Transverse colon (tissue), 4 donors: ENCODE measurements at regions of chr12 and their contacts with region 1.

Region 1: GRCh38 chr12:13011098-13011497 is 11.0 kb upstream of the HEBP1 start:
- DNase-seq: no peak
- H3K4me3 ChIP-seq: no peak overlapping the region
- H3K27ac ChIP-seq: no peak overlapping the region
- H3K4me1 ChIP-seq: no peaks in the 10 kb centered on the region
- H3K27me3 ChIP-seq: peaks cover 9% of the 10 kb centered on the region
- CTCF ChIP-seq: no peak
- EP300 ChIP-seq: no peak
- POLR2A ChIP-seq: no peak

Region 2: DNA sequence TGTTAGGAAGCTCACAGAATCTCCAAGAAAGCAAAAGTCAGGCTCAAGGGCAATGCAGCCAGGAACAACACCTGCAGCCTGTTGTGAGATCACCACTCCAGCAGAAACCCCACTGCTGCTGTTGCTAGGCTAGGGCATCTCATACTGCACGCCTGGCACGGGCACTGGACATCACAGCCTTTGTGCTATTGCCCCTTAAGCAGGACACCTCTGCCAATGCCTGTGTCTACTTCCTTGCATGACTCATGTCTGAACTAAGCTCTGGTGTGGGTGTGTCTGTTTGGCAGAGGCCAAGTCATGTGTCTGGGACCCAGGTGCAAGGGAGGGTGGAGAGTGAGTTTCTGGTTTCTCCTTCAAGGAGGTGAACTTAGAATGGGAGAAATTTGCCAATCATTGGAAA is 207.9 kb before region 1 on chr12:
- in situ Hi-C with region 1: no loop called
- intact Hi-C with region 1: no loop called
- DNase-seq: peak; percentile 85
- H3K4me3 ChIP-seq: no peak overlapping the region
- H3K27ac ChIP-seq: peak overlapping the region; percentile 67 to 87 (median 78)
- H3K4me1 ChIP-seq: peaks cover 4 to 59% (median 22%) of the 10 kb centered on the region in 4 donors
- H3K27me3 ChIP-seq: no peaks in the 10 kb centered on the region
- CTCF ChIP-seq: no peak
- EP300 ChIP-seq: peak; percentile 49
- POLR2A ChIP-seq: peak; percentile 51

Region 3: DNA sequence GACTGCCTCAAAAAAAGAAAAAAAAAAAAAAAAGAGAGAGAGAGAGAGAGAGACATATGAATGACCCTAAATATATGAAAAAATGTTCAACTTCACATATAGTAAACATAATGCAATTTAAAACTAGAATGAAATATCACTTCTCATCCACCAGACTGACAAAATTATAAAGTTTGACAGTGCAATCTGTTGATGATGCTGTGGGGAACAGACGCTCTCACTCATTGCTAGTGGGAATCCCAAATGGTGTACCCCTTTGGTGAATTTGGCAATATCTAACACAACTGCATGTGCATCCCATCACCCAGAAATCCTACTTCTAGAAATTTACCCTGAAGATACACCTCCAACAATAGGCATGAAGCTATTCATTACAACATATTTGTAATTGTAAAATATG is 94.7 kb after region 1 on chr12:
- in situ Hi-C with region 1: no loop called
- intact Hi-C with region 1: no loop called
- DNase-seq: no peak
- H3K4me3 ChIP-seq: no peak overlapping the region
- H3K27ac ChIP-seq: no peak overlapping the region
- H3K4me1 ChIP-seq: peaks cover 0 to 20% (median 16%) of the 10 kb centered on the region in 4 donors
- H3K27me3 ChIP-seq: no peaks in the 10 kb centered on the region
- CTCF ChIP-seq: no peak
- EP300 ChIP-seq: no peak
- POLR2A ChIP-seq: no peak

Region 4: DNA sequence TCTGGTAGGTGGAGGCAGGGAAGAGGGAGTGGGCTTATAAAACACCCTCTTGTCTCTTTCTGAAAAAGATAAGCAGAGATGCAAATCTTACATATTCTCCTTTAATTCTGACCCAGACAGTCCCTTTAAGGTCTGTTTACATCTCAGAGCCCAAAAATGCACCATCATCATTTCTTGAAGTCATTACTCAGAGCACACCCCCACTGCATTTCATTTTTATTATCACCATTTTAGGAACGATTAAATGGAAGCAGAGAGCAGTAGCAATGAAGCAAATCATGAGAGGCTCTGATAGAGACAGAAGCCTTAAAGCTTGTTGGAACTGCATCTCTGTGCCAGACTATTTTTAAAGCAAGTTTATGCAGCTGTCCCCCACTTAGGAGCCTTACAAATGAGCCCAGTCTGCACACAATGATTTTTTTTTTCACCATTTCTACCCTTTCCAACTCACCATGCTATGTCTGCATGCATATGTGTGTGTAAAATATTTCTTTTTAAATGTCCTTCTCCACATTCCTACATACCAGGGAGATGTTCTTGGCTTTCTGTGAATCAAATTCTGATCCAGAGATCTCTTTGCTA is 659.3 kb after region 1 on chr12:
- in situ Hi-C with region 1: no loop called
- intact Hi-C with region 1: loop called (anchors 5 kb)
- DNase-seq: no peak
- H3K4me3 ChIP-seq: no peak overlapping the region
- H3K27ac ChIP-seq: no peak overlapping the region
- H3K4me1 ChIP-seq: no peaks in the 10 kb centered on the region
- H3K27me3 ChIP-seq: no peaks in the 10 kb centered on the region
- CTCF ChIP-seq: no peak
- EP300 ChIP-seq: no peak
- POLR2A ChIP-seq: no peak